Activated CD8-positive, alpha-beta T cell treated with anti-CD3 and anti-CD28 coated beads, Interleukin-2, amount 10 ng/mL, durations not matched to agents 7 days and 5 days (primary cell): ENCODE measurements at regions of chr12 and their contacts with region 1.

Region 1: GRCh38 chr12:48851883-48852733 is at the start of gene DDX23:
- DNase-seq: peak; percentile 96
- ATAC-seq: peak; percentile 95
- H3K4me3 Mint-ChIP-seq: peak within 1 kb of the TSS; percentile 98
- H3K27ac Mint-ChIP-seq: peak within 1 kb of the TSS; percentile 98
- H3K4me1 Mint-ChIP-seq: peaks cover 33% of the 10 kb centered on the region
- H3K27me3 Mint-ChIP-seq: no peaks in the 10 kb centered on the region
- total RNA-seq, gene DDX23: 127 to 154 TPM

Region 2: DNA sequence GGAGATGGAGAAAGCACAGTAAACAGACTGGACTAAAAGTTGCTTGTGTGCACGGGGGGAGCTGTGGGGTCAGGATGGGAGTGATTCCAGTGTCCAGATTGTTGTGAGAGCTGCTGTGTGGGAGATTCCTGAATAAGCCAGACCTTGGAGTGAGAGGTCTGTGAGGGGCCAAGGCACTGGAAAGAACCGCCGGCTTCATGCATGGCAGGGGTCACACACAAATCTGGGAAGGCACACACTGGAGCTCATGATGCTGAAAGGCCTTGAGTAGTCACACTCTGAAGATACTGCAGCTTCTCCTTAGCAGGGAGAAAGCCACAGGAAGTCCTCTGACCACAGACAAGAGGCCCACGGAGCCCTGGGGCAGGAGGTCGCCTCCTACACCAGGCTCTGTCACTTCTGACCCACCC is 86.3 kb before region 1 on chr12:
- CTCF ChIA-PET with region 1: no interaction called
- POLR2A ChIA-PET with region 1: no interaction called
- DNase-seq: peak; percentile 70
- ATAC-seq: peak; percentile 91
- H3K4me3 Mint-ChIP-seq: peak overlapping the region; percentile 35
- H3K27ac Mint-ChIP-seq: peak overlapping the region; percentile 76
- H3K4me1 Mint-ChIP-seq: peaks cover 28% of the 10 kb centered on the region
- H3K27me3 Mint-ChIP-seq: no peaks in the 10 kb centered on the region

Region 3: DNA sequence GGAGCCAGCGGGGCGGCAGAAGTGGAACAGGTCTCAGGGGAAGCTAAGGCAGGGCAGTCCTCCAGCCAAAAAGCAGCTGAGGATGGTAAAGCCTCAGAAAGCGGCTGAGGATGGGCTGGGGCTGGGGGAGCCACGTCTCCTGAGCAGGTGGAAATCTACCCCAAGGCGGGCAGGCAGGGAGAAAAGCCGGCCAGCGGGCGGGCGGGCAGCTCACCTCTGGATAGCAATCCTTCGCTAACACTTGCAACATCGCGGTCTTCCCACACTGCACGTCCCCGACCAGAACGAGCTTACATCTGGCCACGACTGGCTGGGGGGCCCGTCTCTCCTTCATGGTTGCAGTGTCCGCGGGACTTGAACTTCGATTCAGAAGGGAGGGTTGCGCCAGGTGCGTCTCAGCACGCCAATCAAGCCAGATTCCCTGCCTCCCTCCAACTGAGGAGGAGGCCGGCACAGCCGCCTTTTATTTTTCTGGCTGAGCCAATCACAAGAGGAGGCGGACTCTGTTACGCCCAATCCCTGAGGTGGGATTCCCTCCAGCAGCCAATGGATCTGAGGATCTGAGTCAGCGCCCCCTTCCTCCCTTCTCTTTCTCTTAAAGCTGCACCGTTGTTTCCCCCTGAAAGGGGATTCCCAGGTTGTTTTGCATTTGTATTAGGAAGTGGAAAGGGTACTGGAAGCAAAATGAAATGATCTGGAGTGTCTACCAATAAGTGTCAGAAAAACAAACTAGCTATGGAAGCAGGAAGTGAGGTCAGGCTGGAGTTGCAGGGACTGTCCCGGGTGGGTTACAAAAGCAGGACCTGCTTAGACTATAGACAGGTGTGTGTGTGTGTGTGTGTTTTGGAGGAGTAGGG is 13.6 kb after region 1 on chr12 and contains the start of gene RND1:
- CTCF ChIA-PET with region 1: interaction called, 83 read pairs
- POLR2A ChIA-PET with region 1: interaction called, 43 read pairs
- DNase-seq: peak; percentile 88
- ATAC-seq: peak; percentile 98
- H3K4me3 Mint-ChIP-seq: peak within 1 kb of the TSS; percentile 81
- H3K27ac Mint-ChIP-seq: peak within 1 kb of the TSS; percentile 71
- H3K4me1 Mint-ChIP-seq: peaks cover 23% of the 10 kb centered on the region
- H3K27me3 Mint-ChIP-seq: peaks cover 25% of the 10 kb centered on the region
- total RNA-seq, gene RND1: 1.4 to 2.5 TPM

Region 4: DNA sequence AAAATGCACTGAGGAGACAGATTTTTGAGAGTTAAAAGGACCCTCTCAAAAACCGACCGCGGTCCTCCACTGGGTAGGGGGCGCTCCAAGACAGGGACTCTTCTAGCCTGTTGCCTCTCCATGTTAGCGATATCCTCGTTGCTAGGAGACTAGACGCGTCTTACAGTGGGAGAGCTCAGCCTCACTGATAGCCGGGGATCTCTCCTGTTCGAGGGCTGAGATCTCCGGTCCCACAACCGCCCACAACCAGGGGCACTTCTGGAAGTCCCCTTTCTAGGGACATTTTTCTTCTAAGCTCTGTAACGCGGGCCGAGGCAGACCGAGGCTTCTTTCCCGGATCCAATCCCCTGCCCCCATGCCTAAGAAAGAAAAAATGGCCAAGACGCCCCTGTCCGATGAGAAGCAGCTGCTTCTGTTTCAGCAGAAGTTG is 51.9 kb after region 1 on chr12:
- CTCF ChIA-PET with region 1: interaction called, 35 read pairs
- POLR2A ChIA-PET with region 1: interaction called, 4 read pairs
- DNase-seq: peak; percentile 88
- ATAC-seq: peak; percentile 97
- H3K4me3 Mint-ChIP-seq: peak overlapping the region; percentile 64
- H3K27ac Mint-ChIP-seq: no peak overlapping the region
- H3K4me1 Mint-ChIP-seq: peaks cover 12% of the 10 kb centered on the region
- H3K27me3 Mint-ChIP-seq: peaks cover 12% of the 10 kb centered on the region

Region 5: GRCh38 chr12:48936379-48936979 is 84.4 kb after region 1 on chr12:
- CTCF ChIA-PET with region 1: interaction called, 106 read pairs
- POLR2A ChIA-PET with region 1: interaction called, 6 read pairs
- DNase-seq: peak; percentile 88
- ATAC-seq: peak; percentile 60
- H3K4me3 Mint-ChIP-seq: no peak overlapping the region
- H3K27ac Mint-ChIP-seq: no peak overlapping the region
- H3K4me1 Mint-ChIP-seq: peaks cover 26% of the 10 kb centered on the region
- H3K27me3 Mint-ChIP-seq: no peaks in the 10 kb centered on the region

Region 6: DNA sequence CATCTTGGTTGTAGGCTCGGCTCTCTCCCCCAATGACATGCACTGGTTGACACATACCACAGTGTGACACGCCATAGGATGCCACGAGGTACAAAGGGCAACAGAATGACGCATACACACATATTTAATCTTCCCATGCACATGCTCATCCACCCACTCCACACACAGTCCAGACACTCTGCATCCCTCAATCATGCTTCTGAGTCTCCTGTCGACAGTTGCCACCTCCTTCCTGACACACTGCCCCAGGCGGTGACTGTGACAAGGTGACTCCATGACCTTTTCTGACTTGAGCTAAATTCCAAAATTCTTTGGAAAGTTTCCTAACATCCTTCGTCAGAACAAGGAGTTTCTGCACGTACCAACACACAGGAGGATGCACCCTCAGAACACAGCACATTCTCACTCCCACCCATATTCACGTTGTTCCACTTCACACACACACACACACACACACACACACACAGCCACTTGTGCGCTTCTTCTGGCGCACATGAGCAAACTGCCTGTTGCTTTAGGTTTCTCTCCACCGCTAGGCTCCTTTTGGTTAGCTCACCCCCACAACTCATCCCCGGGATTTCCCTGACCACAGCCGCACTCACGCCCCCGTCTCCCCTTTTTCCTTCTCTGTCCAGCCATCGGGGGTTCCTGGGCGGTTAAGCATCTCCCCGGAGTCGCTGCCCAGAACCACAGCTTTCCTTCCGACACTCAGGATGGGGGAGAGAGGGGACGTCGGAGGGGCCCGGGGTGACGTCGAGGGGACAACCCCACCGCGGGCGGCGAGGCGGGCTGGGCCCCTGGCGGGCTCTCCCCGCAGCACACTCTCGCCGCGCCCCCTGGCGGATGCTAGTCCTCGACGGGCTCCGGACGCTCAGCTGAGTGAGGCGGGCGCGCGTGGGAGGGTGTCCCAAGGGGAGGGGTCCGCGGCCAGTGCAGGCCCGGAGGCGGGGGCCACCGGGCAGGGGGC is 125.5 kb after region 1 on chr12:
- CTCF ChIA-PET with region 1: interaction called, 59 read pairs
- POLR2A ChIA-PET with region 1: interaction called, 10 read pairs
- DNase-seq: peak; percentile 80
- ATAC-seq: peak; percentile 54
- H3K4me3 Mint-ChIP-seq: peak overlapping the region; percentile 47
- H3K27ac Mint-ChIP-seq: peak overlapping the region; percentile 32
- H3K4me1 Mint-ChIP-seq: peaks cover 58% of the 10 kb centered on the region
- H3K27me3 Mint-ChIP-seq: peaks cover 72% of the 10 kb centered on the region